ENCODE measurements at regions of chr1 and their contacts with region 1.

Region 1: GRCh38 chr1:54273092-54273794 is 73.3 kb downstream of the MRPL37 start:
- DNase-seq: no peak
- H3K4me3 ChIP-seq: no peak overlapping the region
- H3K27ac ChIP-seq: peak overlapping the region; percentile 80 to 86
- H3K4me1 ChIP-seq: peaks cover 44% of the 10 kb centered on the region
- H3K27me3 ChIP-seq: no peaks in the 10 kb centered on the region
- CTCF ChIP-seq: no peak
- POLR2A ChIP-seq: no peak

Region 2: GRCh38 chr1:53508991-53509666 is 764.1 kb before region 1 on chr1:
- intact Hi-C with region 1: no loop called
- DNase-seq: no peak
- H3K4me3 ChIP-seq: no peak overlapping the region
- H3K27ac ChIP-seq: peak overlapping the region; percentile 18 to 21
- H3K4me1 ChIP-seq: peaks cover 19% of the 10 kb centered on the region
- H3K27me3 ChIP-seq: no peaks in the 10 kb centered on the region
- CTCF ChIP-seq: no peak
- POLR2A ChIP-seq: no peak

Region 3: GRCh38 chr1:54121482-54122134 is 151.6 kb before region 1 on chr1:
- intact Hi-C with region 1: loop called (anchors 5 kb)
- DNase-seq: peak; percentile 76
- H3K4me3 ChIP-seq: peak overlapping the region in 1 of 2 donors; percentile 20
- H3K27ac ChIP-seq: no peak overlapping the region
- H3K4me1 ChIP-seq: peaks cover 3% of the 10 kb centered on the region
- H3K27me3 ChIP-seq: no peaks in the 10 kb centered on the region
- CTCF ChIP-seq: peak; percentile 36 to 88 (median 80)
- POLR2A ChIP-seq: no peak

Region 4: DNA sequence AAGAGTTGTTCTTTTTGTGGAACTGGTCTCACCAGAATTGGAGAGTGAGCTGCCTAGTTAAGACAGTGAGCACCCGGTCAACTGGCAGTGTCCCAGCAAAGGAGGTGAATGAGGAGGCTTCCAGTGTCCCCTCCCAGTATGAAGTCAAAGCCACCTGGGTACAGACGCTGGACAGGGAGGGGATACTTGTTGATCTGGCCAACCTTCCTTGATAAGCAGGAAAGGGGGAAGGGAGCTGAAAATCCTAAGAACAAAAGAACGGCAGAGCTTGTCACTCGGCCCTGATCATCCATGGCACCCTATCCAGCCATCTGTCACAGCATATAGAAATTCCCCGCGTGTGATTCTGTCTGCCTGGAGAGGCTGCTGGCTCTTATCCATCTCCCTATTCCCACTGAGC is 41.5 kb after region 1 on chr1:
- intact Hi-C with region 1: no loop called
- DNase-seq: peak; percentile 81
- H3K4me3 ChIP-seq: no peak overlapping the region
- H3K27ac ChIP-seq: peak overlapping the region; percentile 67 to 69
- H3K4me1 ChIP-seq: peaks cover 32% of the 10 kb centered on the region
- H3K27me3 ChIP-seq: no peaks in the 10 kb centered on the region
- CTCF ChIP-seq: no peak
- POLR2A ChIP-seq: peak; percentile 28

Measured in prostate gland (tissue), 2 donors.